PC-9 (cell line): ENCODE measurements at regions of chr19 and their contacts with region 1.

Region 1: DNA sequence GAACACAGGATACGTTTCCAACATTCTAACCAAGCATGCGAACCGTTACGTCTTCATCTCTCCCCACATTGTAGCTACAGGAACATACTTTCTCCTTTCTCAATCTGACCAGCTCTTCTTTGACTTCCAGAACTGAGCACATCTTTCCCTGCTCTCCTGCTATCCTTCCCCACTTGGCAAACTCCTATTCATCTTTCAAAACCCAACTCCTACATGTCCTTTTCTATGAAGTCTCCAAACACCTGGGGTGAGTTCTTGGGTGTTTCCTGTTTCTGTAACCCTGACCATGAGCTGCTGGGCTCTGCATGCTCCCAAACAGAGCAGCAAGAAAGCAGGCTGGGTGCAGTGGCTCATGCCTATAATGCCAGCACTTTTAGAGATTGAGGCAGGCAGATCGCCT is 6.6 kb downstream of the ACER1 start:
- DNase-seq: no peak
- H3K4me3 ChIP-seq: no peak overlapping the region
- H3K27ac ChIP-seq: no peak overlapping the region
- H3K4me1 ChIP-seq: no peaks in the 10 kb centered on the region
- H3K27me3 ChIP-seq: peaks cover 16% of the 10 kb centered on the region
- CTCF ChIP-seq: no peak

Region 2: GRCh38 chr19:5762608-5763217 is 564.1 kb before region 1 on chr19:
- CTCF ChIA-PET with region 1: no interaction called
- POLR2A ChIA-PET with region 1: interaction called, 12 read pairs
- intact Hi-C with region 1: no loop called
- DNase-seq: no peak
- H3K4me3 ChIP-seq: no peak overlapping the region
- H3K27ac ChIP-seq: no peak overlapping the region
- H3K4me1 ChIP-seq: no peaks in the 10 kb centered on the region
- H3K27me3 ChIP-seq: no peaks in the 10 kb centered on the region
- CTCF ChIP-seq: no peak

Region 3: GRCh38 chr19:6212403-6213265 is 114.2 kb before region 1 on chr19:
- CTCF ChIA-PET with region 1: no interaction called
- POLR2A ChIA-PET with region 1: no interaction called
- intact Hi-C with region 1: no loop called
- DNase-seq: no peak
- H3K4me3 ChIP-seq: no peak overlapping the region
- H3K27ac ChIP-seq: no peak overlapping the region
- H3K4me1 ChIP-seq: no peaks in the 10 kb centered on the region
- H3K27me3 ChIP-seq: no peaks in the 10 kb centered on the region
- CTCF ChIP-seq: no peak